PC-3 (cell line): ENCODE measurements at regions of chr14 and their contacts with region 1.

Region 1: GRCh38 chr14:77580964-77581505 is 35.4 kb downstream of the SPTLC2 start:
- DNase-seq: peak; percentile 43
- ATAC-seq: peak; percentile 51
- H3K4me3 ChIP-seq: peak overlapping the region; percentile 6; the same call in 1 of the 2 replicates
- H3K27ac ChIP-seq: no peak overlapping the region
- H3K4me1 ChIP-seq: no peaks in the 10 kb centered on the region
- H3K27me3 ChIP-seq: no peaks in the 10 kb centered on the region
- CTCF ChIP-seq: no peak

Region 2: GRCh38 chr14:77570706-77571272 is 10.2 kb before region 1 on chr14:
- CTCF ChIA-PET with region 1: no interaction called
- POLR2A ChIA-PET with region 1: interaction called, 13 read pairs
- intact Hi-C with region 1: no loop called
- DNase-seq: no peak
- ATAC-seq: no peak
- H3K4me3 ChIP-seq: no peak overlapping the region
- H3K27ac ChIP-seq: no peak overlapping the region
- H3K4me1 ChIP-seq: no peaks in the 10 kb centered on the region
- H3K27me3 ChIP-seq: no peaks in the 10 kb centered on the region
- CTCF ChIP-seq: no peak